CD8-positive, alpha-beta T cell (primary cell): ENCODE measurements at regions of chr2 and their contacts with region 1.

Region 1: DNA sequence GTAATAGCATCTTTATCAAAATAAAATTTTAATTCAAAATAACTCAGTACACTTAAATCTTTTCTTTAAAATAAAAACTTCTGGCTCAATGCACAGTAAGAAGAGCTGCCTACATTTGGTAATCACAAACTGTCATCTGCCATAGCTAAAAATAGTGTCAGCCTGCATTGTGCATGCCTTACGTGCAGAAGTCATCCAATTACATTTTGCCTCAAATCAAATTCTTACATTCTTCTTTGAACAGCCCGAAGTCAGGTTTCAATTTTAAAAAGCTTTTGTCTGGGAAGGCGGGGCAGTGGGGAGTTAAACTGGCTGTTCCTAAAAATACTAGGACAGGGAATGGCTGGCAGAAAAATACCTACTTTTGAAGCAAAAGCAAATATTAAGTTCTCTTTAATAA is 51.1 kb downstream of the RTN4 start:
- DNase-seq: no peak
- ATAC-seq: no peak
- H3K4me3 ChIP-seq: no peak overlapping the region
- H3K4me3 Mint-ChIP-seq: no peak overlapping the region
- H3K27ac ChIP-seq: no peak overlapping the region
- H3K27ac Mint-ChIP-seq: no peak overlapping the region
- H3K4me1 ChIP-seq: peaks cover 29% of the 10 kb centered on the region
- H3K4me1 Mint-ChIP-seq: peaks cover 79% of the 10 kb centered on the region
- H3K27me3 ChIP-seq: no peaks in the 10 kb centered on the region
- H3K27me3 Mint-ChIP-seq: no peaks in the 10 kb centered on the region
- CTCF ChIP-seq: no peak

Region 2: GRCh38 chr2:54983345-54984260 is 15.6 kb before region 1 on chr2:
- CTCF ChIA-PET with region 1: interaction called, 3 read pairs
- POLR2A ChIA-PET with region 1: no interaction called
- intact Hi-C with region 1: loop called in 1 of 2 experiments (anchors 2 kb)
- DNase-seq: no peak
- ATAC-seq: no peak
- H3K4me3 ChIP-seq: no peak overlapping the region
- H3K4me3 Mint-ChIP-seq: no peak overlapping the region
- H3K27ac ChIP-seq: no peak overlapping the region
- H3K27ac Mint-ChIP-seq: no peak overlapping the region
- H3K4me1 ChIP-seq: no peaks in the 10 kb centered on the region
- H3K4me1 Mint-ChIP-seq: peaks cover 50% of the 10 kb centered on the region
- H3K27me3 ChIP-seq: no peaks in the 10 kb centered on the region
- H3K27me3 Mint-ChIP-seq: no peaks in the 10 kb centered on the region
- CTCF ChIP-seq: no peak

Region 3: DNA sequence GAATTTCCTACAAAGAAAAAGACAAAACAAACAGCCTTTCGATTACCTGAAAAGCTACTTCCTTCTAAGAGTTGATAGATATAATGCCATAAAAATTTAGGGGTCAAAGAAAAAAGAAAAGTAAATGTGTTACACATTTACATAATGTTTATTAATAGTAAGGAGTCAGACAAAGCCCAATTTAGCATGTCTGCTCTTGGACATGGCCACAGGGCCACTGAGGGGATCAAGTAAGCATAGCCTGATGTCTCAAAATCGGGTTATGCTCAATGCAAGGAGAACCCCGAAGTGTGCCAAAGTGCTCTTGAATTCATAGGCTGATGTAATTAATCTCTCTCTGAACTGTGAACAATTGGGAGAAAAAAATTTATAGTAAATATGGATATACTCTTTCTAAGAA is 10.6 kb before region 1 on chr2:
- CTCF ChIA-PET with region 1: no interaction called
- POLR2A ChIA-PET with region 1: no interaction called
- intact Hi-C with region 1: loop called in 1 of 2 experiments (anchors 1 kb)
- DNase-seq: no peak
- ATAC-seq: no peak
- H3K4me3 ChIP-seq: no peak overlapping the region
- H3K4me3 Mint-ChIP-seq: no peak overlapping the region
- H3K27ac ChIP-seq: no peak overlapping the region
- H3K27ac Mint-ChIP-seq: no peak overlapping the region
- H3K4me1 ChIP-seq: peaks cover 5% of the 10 kb centered on the region
- H3K4me1 Mint-ChIP-seq: peaks cover 55% of the 10 kb centered on the region
- H3K27me3 ChIP-seq: no peaks in the 10 kb centered on the region
- H3K27me3 Mint-ChIP-seq: no peaks in the 10 kb centered on the region
- CTCF ChIP-seq: no peak